Posterior vena cava (tissue), 2 donors: ENCODE measurements at regions of chr15 and their contacts with region 1.

Region 1: DNA sequence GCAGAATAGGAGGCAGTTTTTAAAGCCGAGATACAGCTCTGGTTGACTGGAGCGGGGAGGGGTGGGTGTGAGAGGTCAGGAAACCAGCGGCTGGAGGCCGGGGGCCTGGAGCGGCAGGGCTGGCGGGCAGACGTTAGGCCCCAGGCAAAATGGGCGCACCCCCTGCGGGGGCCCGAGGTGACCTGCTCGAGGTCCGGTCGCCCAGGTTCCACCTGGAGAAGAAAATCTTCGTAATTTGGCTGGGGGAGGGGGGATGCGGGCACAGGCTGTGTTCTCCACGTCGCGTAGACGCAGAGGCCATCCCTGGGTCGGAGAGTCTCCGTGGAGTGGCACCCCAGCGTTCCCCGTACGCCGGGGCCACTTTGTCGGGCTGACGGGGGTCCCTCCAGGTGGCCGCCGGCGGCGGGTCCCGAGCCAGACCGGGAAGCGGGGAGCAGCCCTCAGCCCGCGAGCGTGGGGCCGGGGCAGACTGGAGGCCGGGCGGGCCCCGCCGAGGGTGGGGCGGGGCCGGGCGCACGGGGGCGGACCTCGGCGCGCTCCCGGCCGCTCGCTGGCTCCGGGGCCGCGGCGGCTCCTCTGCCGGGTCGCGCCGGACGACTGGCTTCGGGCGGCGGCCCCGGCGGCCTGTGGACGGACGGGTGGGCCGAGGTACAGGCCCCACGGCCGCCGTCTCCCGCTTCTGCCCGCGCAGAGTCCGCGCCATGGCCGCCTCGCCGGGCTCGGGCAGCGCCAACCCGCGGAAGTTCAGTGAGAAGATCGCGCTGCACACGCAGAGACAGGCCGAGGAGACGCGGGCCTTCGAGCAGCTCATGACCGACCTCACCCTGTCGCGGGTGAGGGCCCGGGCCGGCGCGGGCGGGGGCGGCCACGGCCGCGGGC is at the start of gene CRTC3:
- DNase-seq: peak; percentile 87
- total RNA-seq, gene CRTC3: 48.0 to 55.5 TPM

Region 2: DNA sequence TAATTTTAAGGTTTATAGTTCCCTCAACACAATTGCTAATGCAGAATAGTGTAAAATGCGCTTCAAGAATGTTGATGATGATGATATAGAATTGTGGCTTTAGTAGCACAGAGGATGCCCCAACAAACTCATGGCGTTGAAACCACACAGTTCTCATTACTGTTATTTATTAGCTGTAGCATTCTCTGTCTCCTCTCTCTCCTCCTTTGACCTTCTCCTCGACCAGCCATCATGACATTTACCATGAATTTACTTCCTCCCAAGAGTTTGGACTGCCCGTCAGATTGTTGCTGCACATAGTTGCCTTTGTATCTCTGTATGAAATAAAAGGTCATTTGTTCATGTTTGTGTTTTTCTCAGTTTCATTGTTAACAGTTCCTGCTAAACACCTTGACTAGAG is 27.7 kb before region 1 on chr15:
- intact Hi-C with region 1: loop called in 1 of 2 experiments (anchors 1 kb)
- DNase-seq: no peak

Region 3: GRCh38 chr15:90581771-90582352 is 52.3 kb after region 1 on chr15:
- intact Hi-C with region 1: no loop called
- DNase-seq: no peak

Region 4: DNA sequence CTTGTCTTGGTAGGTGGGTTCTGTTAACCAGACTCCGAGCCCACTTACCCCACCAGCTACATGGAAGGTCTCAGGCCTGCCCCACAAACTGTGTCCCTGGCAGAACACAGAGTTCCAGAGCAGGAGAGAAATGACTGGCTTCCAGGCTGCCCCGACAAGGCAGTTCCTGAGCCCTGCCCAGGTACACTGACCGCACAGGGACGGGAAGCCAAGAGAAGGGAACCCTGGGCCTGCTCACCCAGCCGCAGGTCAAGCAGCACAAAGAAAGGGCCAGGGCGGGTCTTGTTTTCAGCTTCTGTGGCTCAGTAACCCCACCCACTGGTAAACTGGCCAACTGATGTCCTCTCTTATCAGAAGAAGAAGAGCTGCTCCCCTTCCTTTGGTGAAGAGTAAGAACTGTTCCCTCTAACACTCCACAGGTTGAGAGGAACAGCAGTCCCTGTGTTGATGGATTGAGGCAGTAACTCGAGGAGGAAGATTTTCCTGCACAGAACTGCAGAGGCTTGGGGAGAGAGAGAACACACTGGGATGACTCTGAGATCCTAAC is 68.5 kb after region 1 on chr15:
- intact Hi-C with region 1: loop called in 1 of 2 experiments (anchors 10 kb)
- DNase-seq: peak; percentile 85

Region 5: GRCh38 chr15:90742087-90742486 is 212.5 kb after region 1 on chr15:
- intact Hi-C with region 1: no loop called
- DNase-seq: no peak